ENCODE measurements at regions of chr5 and their contacts with region 1.

Region 1: GRCh38 chr5:151126199-151126645 is 31.4 kb downstream of the ANXA6 start:
- DNase-seq: peak; percentile 75
- H3K27ac ChIP-seq: no peak overlapping the region
- CTCF ChIP-seq: peak; percentile 86

Region 2: DNA sequence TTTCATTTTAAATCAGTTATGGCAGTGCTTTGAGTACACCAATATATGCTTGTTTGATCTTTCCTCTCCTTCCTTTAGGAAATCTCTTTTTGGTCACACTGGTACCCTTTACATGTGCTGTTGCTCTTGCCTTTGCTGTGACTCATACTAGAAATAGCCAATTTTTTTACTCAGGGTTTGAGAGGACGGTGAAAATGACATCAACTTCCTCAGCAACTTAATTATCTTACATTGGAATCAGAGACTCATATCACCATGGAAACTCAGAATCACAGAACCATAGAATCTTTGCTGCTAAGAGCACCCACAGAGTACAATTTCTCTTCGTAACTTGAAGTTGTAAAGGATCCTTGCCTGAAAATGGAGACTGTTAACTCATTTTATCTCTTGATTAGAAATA is 207.6 kb before region 1 on chr5:
- CTCF ChIA-PET with region 1: no interaction called
- POLR2A ChIA-PET with region 1: no interaction called
- DNase-seq: no peak
- H3K27ac ChIP-seq: no peak overlapping the region
- CTCF ChIP-seq: no peak

Region 3: DNA sequence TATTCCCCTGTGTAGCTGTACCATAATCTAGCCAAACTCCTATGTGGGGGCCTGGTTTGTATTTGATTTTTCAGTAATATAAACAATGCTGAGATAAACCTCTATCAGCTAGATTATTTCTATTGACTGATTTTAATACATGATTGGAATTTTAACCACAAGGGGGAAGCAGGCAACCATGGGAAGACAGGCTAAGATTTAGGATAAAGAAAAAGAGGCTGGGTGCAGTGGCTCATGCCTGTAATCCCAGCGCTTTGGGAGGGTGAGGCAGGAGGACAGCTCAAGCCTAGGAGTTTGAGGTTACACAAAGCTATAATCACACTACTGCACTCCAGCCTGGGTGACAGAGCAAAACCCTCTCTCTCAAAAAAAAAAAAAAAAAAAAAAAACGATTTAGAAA is 124.0 kb before region 1 on chr5:
- CTCF ChIA-PET with region 1: interaction called, 13 read pairs
- POLR2A ChIA-PET with region 1: no interaction called
- DNase-seq: peak; percentile 82
- H3K27ac ChIP-seq: no peak overlapping the region
- CTCF ChIP-seq: peak; percentile 70

Region 4: GRCh38 chr5:151141535-151141934 is 15.3 kb after region 1 on chr5:
- CTCF ChIA-PET with region 1: interaction called, 25 read pairs
- POLR2A ChIA-PET with region 1: no interaction called
- DNase-seq: no peak
- H3K27ac ChIP-seq: no peak overlapping the region
- CTCF ChIP-seq: no peak

Region 5: GRCh38 chr5:151164686-151165392 is 38.6 kb after region 1 on chr5:
- CTCF ChIA-PET with region 1: interaction called, 109 read pairs
- POLR2A ChIA-PET with region 1: no interaction called
- DNase-seq: peak; percentile 85
- H3K27ac ChIP-seq: no peak overlapping the region
- CTCF ChIP-seq: peak; percentile 97

Region 6: DNA sequence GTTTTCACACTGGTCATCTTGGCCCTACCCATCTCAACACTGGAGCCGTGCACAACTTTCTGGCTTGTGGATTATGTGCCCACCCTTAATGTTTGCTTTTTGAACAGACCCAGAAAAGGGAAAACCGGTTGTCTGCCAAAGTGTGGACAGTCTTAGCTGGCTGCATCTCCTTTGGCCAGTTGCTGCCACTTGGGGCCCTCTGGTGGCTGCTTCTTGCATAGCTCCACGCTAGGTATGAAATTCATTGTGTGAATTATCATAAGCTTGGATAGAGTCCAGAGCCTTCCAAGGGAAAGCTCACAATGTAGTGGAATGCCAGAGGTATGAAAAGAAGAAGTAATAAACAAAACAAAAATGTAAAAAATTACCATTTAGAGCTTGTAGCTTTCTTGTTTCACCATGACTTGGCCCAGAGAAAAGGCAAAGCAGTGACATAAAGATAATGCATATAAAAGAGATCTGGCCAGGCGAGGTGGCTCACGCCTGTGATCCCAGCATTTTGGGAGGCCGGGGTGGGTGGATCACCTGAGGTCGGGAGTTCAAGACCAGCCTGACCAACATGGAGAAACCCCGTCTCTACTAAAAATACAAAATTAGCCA is 189.9 kb after region 1 on chr5:
- CTCF ChIA-PET with region 1: interaction called, 11 read pairs
- POLR2A ChIA-PET with region 1: no interaction called
- DNase-seq: peak; percentile 86
- H3K27ac ChIP-seq: no peak overlapping the region
- CTCF ChIP-seq: peak; percentile 96

Measured in RWPE1 (cell line).